Activated B cell treated with CpG ODN at 0.5 μM for 24 hours (primary cell): ENCODE measurements at regions of chr5 and their contacts with region 1.

Region 1: DNA sequence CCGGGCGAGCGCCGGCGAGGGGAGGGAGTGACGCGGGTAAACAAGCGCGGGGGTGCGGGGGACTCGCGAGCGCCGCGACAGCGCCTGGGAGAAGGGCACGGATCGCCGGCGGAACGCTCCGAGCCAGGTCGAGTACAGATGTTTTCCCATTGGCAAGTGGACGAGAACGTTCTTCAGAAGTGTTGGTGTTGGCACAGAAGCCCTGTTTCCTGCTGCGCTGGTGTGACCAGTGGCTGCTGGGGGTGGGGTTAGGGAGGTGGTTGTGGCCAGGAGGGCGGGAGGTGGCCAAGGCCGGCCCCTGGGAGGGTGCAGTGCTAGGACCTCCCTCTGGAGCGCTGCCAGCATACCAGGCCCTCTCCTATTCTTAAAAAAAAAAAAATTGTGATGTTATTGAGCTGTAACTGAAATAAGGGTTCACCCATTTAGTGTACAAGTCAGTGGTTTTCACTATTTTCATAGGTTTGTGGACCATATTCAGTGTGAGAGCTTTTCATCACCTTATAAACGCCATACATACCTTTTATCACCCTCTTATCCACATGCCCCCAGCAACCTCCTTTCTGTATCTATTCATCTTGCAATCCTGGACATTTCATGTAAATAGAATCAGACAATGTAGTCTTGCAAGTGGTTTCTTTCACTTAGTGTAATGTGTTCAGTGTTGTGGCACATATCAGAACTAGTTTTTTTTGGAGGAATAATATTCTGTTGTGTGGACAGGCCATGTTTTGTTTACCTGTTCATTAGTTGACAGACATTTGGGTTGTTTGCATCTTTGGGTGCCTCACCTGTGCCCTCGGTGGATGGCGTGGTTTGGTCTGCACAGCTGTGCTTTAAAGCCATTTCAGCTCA is 1.1 kb downstream of the SQSTM1 start:
- DNase-seq: peak; percentile 75
- ATAC-seq: peak; percentile 52
- H3K4me3 Mint-ChIP-seq: peak overlapping the region; percentile 96
- H3K27ac Mint-ChIP-seq: peak overlapping the region; percentile 92
- H3K4me1 Mint-ChIP-seq: peaks cover 62% of the 10 kb centered on the region
- H3K27me3 Mint-ChIP-seq: no peaks in the 10 kb centered on the region
- CTCF ChIP-seq: no peak

Region 2: DNA sequence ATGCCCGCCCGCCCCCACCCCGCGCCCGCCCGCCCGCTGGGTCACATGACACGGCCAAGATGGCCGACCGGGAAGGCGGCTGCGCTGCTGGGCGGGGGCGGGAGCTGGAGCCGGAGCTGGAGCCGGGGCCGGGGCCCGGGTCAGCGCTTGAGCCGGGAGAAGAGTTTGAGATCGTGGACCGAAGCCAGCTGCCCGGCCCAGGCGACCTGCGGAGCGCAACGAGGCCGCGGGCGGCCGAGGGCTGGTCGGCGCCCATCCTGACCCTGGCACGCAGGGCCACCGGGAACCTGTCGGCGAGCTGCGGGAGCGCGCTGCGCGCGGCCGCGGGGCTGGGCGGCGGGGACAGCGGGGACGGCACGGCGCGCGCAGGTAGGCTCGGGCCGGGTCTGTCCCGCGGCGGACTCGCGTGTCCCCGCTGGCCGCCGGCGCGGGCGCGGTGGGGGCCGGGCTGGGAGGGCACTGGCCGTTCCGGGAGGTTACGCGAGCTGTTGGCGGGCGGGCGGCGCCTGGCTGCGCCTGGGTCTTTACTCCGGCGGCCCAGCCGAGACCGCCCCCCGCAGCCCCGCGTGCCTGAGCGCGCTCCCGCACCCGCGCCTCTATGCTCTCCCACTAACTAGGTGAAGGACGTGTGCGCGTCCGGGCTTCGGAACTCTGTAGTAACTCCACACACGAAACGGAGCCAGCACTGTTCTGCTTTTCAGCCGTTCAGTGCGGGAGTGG is 271.1 kb before region 1 on chr5 and contains the start of gene RUFY1:
- CTCF ChIA-PET with region 1: no interaction called
- POLR2A ChIA-PET with region 1: interaction called, 3 read pairs
- intact Hi-C with region 1: loop called (anchors 2 kb)
- DNase-seq: peak; percentile 91
- ATAC-seq: peak; percentile 70
- H3K4me3 Mint-ChIP-seq: peak within 1 kb of the TSS; percentile 97
- H3K27ac Mint-ChIP-seq: peak within 1 kb of the TSS; percentile 100
- H3K4me1 Mint-ChIP-seq: peaks cover 60% of the 10 kb centered on the region
- H3K27me3 Mint-ChIP-seq: no peaks in the 10 kb centered on the region
- CTCF ChIP-seq: no peak
- total RNA-seq, gene RUFY1: 83.0 and 95.8 TPM in 2 replicates

Region 3: GRCh38 chr5:179763215-179763945 is 58.4 kb before region 1 on chr5:
- CTCF ChIA-PET with region 1: no interaction called
- POLR2A ChIA-PET with region 1: no interaction called
- intact Hi-C with region 1: loop called (anchors 2 kb)
- DNase-seq: no peak
- ATAC-seq: peak; percentile 71
- H3K4me3 Mint-ChIP-seq: no peak overlapping the region
- H3K27ac Mint-ChIP-seq: no peak overlapping the region
- H3K4me1 Mint-ChIP-seq: peaks cover 51% of the 10 kb centered on the region
- H3K27me3 Mint-ChIP-seq: no peaks in the 10 kb centered on the region
- CTCF ChIP-seq: peak; percentile 74

Region 4: DNA sequence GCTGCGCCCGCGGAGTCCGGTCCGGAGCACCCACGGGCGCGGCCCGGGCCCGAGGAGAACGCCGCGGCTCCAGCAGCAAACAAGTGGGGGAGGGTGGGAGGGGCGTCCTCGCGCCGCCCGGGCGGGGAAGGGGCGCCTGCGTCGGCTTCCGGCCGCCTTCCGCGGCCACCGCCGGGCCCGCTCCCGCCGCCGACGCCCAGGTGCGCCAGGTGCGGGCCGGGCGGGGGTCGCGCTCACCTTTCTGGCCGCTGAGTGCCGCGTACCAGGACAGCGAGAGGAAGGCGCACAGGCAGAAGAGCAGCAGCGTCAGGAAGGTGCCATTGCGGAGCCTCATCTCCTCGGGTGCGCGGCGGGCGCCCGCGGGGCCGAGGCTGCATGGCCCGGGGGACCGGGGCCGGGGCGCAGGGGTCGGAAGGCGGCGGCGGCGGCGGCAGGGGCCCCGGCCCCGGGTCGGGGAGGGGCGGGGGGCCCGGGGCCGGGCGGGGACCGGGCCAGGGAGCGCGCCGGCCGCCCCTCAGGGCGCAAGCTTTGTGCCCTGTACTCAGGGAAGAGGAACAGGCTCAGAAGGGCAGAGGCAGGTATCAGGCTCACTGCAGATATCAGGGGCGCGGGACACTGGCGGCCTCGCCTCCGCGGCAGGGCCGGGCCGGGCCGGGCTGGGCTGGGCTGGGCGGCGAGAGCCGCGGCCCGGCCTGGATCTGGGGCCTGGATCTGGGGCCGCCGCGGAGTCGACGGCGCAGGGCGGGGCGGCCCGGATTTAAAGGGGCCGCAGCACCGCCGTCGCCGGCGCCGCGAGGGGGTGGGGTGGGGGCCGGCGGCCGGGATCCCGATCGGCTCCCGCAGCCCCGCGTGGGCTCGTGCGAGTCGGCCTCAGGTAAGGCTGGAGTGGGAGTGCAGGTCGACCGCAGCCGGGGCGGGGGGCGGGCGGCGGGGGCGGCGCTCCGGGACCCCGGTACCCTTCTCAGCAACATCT is 15.3 kb before region 1 on chr5 and contains the start of gene MGAT4B:
- CTCF ChIA-PET with region 1: interaction called, 16 read pairs
- POLR2A ChIA-PET with region 1: interaction called, 58 read pairs
- intact Hi-C with region 1: loop called (anchors 1 kb)
- DNase-seq: peak; percentile 69
- ATAC-seq: peak; percentile 79
- H3K4me3 Mint-ChIP-seq: peak within 1 kb of the TSS; percentile 79
- H3K27ac Mint-ChIP-seq: peak within 1 kb of the TSS; percentile 70
- H3K4me1 Mint-ChIP-seq: peaks cover 37% of the 10 kb centered on the region
- H3K27me3 Mint-ChIP-seq: no peaks in the 10 kb centered on the region
- CTCF ChIP-seq: no peak
- total RNA-seq, gene MGAT4B: 73.6 and 85.3 TPM in 2 replicates

Region 5: DNA sequence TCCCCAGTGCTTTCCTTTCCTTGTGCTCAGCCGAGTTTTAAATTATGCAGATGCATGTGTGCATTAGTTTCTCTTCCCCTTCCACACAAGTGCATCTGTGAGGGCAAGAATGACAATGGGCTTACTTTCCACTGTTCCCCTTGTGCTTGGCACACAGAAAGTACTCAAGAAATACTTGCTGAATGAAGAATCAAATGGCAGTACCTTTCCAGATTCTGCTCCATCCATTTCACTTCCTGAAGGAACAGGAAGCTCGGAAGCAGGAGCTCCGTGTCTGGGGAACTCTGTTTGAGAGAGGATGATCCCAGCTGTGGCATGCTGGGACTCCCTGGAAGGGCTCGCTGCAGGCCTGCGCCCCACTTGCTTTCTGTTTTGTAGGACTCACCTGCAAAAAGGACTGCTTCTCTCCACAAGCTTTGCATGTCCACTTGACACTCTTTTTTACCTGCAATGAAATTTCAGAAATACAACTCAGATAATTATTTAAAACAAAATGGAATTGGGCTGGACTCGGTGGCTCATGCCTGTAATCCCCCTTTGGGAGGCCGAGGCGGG is 31.3 kb after region 1 on chr5:
- CTCF ChIA-PET with region 1: no interaction called
- POLR2A ChIA-PET with region 1: interaction called, 20 read pairs
- intact Hi-C with region 1: loop called (anchors 1 kb)
- DNase-seq: no peak
- ATAC-seq: peak; percentile 93
- H3K4me3 Mint-ChIP-seq: peak overlapping the region; percentile 17
- H3K27ac Mint-ChIP-seq: peak overlapping the region; percentile 80
- H3K4me1 Mint-ChIP-seq: peaks cover 44% of the 10 kb centered on the region
- H3K27me3 Mint-ChIP-seq: no peaks in the 10 kb centered on the region
- CTCF ChIP-seq: no peak

Region 6: GRCh38 chr5:179907570-179908324 is 85.9 kb after region 1 on chr5 and contains the start of gene TBC1D9B:
- CTCF ChIA-PET with region 1: no interaction called
- POLR2A ChIA-PET with region 1: interaction called, 4 read pairs
- intact Hi-C with region 1: loop called (anchors 5 kb)
- DNase-seq: peak; percentile 74
- ATAC-seq: peak; percentile 90
- H3K4me3 Mint-ChIP-seq: peak within 1 kb of the TSS; percentile 87
- H3K27ac Mint-ChIP-seq: peak within 1 kb of the TSS; percentile 83
- H3K4me1 Mint-ChIP-seq: peaks cover 29% of the 10 kb centered on the region
- H3K27me3 Mint-ChIP-seq: no peaks in the 10 kb centered on the region
- CTCF ChIP-seq: no peak
- total RNA-seq, gene TBC1D9B: 111 and 117 TPM in 2 replicates

Region 7: DNA sequence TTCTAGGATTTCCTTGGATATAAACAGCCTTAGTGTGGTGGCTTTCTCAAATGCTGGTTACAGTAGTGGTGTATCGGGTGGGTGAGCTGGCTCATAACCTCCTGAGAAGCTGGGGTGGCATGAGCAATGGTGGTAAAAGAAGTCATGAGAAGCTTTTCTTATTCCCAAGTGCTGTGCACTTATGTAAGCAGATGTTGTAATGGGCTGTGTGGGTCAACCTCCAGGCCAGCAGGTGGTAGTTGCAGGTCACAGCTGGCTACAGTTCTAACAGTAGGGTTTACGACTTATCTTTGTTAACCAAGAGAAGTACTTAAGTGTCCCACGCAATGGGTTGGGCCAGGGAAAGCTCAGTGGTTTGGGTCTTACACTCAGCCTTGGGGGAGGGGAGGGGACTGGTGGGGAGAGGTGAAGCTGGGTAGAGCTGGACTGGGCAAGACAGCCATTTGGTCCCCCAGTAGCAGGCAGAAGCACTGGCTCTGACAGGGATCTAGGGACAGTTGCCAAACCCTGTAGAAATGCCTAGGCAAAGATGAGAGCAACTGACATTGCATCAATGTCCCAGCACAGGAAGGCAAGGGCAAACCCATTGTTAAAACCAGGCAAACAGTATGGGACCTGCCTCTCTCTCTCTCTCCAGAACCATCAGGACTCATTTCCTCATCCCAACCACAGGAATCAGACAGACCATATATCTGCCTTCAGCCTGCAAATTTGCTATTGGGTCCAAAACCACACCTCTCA is 172.9 kb after region 1 on chr5:
- CTCF ChIA-PET with region 1: no interaction called
- POLR2A ChIA-PET with region 1: no interaction called
- intact Hi-C with region 1: no loop called
- DNase-seq: no peak
- ATAC-seq: no peak
- H3K4me3 Mint-ChIP-seq: no peak overlapping the region
- H3K27ac Mint-ChIP-seq: no peak overlapping the region
- H3K4me1 Mint-ChIP-seq: no peaks in the 10 kb centered on the region
- H3K27me3 Mint-ChIP-seq: peaks cover 1% of the 10 kb centered on the region
- CTCF ChIP-seq: no peak